SK-N-SH (cell line): ENCODE measurements at regions of chr9 and their contacts with region 1.

Region 1: DNA sequence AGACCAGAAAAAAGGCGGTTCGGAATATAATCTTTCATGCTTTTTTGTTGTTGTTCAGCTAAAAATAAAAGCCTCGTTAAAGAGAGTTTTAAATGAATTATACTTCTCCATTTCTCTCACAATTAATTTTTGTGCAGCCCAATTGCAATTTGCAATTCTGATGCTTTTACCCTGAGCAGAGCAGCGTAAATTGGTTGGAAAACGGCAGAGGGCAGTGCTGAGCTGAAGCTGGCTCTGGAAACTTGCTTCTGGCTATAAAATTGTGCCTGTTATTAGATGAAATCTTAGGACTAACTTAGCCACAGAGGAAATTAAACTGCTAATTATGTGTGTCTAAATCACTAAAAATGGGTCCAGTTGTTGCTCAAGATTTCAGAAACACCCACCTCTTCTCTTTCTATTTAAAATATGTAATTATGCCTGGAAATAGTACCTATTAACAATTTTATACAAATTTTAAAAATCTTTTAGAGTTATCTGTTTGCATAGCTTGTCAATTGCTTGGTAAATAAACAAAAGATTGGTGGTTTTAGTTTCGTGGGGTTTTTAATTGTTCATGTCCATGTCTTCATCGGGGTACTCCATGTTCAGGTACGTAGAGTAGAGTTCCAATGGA is 441.8 kb upstream of the TLE4 start:
- DNase-seq: peak; percentile 42
- H3K4me3 ChIP-seq: peak overlapping the region in 1 of 2 experiments; percentile 30; a peak in 1 of 4 replicates
- H3K27ac ChIP-seq: peak overlapping the region in 1 of 2 experiments; percentile 47; a peak in 2 of 4 replicates
- H3K4me1 ChIP-seq: peaks cover 4 to 26% of the 10 kb centered on the region in 2 experiments; a peak in 3 of 4 replicates
- H3K27me3 ChIP-seq: no peaks in the 10 kb centered on the region
- CTCF ChIP-seq: peak; percentile 95
- EP300 ChIP-seq: no peak
- RAD21 ChIP-seq: peak; percentile 89

Region 2: GRCh38 chr9:78932830-78933627 is 196.9 kb before region 1 on chr9:
- CTCF ChIA-PET with region 1: no interaction called
- POLR2A ChIA-PET with region 1: no interaction called
- DNase-seq: no peak
- H3K4me3 ChIP-seq: no peak overlapping the region
- H3K27ac ChIP-seq: peak overlapping the region; percentile 47 to 63; a peak in 3 of 4 replicates
- H3K4me1 ChIP-seq: peaks cover 0 to 19% of the 10 kb centered on the region in 2 experiments; a peak in 2 of 4 replicates
- H3K27me3 ChIP-seq: no peaks in the 10 kb centered on the region
- CTCF ChIP-seq: no peak
- EP300 ChIP-seq: peak in 1 of 2 experiments; percentile 90; a peak in 2 of 4 replicates
- RAD21 ChIP-seq: no peak

Region 3: GRCh38 chr9:79080536-79080935 is 49.4 kb before region 1 on chr9:
- CTCF ChIA-PET with region 1: no interaction called
- POLR2A ChIA-PET with region 1: no interaction called
- DNase-seq: no peak
- H3K4me3 ChIP-seq: no peak overlapping the region
- H3K27ac ChIP-seq: no peak overlapping the region
- H3K4me1 ChIP-seq: no peaks in the 10 kb centered on the region
- H3K27me3 ChIP-seq: no peaks in the 10 kb centered on the region
- CTCF ChIP-seq: no peak
- EP300 ChIP-seq: no peak
- RAD21 ChIP-seq: no peak

Region 4: DNA sequence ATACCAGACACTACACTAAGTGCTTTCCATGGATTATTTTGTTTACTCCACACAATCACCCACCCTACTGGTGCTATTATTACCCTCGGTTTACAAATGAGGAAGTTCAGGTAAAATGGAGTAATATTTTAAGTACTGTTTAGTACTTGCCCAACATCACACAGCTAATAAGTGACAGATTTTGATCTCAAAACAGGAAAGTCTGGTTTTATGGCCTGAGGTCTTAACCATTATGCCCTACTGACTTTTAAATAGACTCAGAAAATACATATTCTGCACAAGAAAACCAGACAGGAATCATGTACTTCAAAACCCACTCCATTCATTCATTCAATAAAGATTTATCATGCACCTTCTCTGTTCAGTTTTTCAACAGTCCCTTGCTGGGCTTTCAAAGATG is 10.8 kb after region 1 on chr9:
- CTCF ChIA-PET with region 1: interaction called, 17 read pairs
- POLR2A ChIA-PET with region 1: no interaction called
- DNase-seq: no peak
- H3K4me3 ChIP-seq: no peak overlapping the region
- H3K27ac ChIP-seq: no peak overlapping the region
- H3K4me1 ChIP-seq: no peaks in the 10 kb centered on the region
- H3K27me3 ChIP-seq: no peaks in the 10 kb centered on the region
- CTCF ChIP-seq: no peak
- EP300 ChIP-seq: no peak
- RAD21 ChIP-seq: no peak